ENCODE measurements at regions of chr14 and their contacts with region 1.

Region 1: DNA sequence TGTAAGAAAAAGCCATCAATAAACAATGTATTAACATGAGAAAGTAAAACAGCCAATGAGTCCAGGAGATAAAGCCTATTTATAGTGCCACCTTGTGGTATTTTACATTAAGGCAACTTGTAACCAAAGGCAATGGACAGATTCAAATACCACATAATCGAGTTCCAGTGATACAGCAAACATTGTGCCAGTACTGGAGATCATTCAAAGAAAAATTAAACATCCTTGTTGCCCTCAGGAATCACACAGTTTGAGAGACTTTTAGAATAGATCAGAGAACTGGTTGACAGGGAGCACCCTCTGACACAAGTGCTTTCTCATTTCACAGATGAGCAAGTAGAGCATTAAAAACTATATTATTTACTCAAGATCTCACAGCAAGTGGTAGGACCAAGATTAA is 98.1 kb downstream of the DDHD1 start:
- DNase-seq: no peak
- H3K4me3 ChIP-seq: no peak overlapping the region
- H3K27ac ChIP-seq: no peak overlapping the region
- H3K4me1 ChIP-seq: no peaks in the 10 kb centered on the region
- H3K27me3 ChIP-seq: no peaks in the 10 kb centered on the region
- CTCF ChIP-seq: peak in 2 of 3 donors; percentile 67
- EP300 ChIP-seq: no peak
- POLR2A ChIP-seq: no peak

Region 2: DNA sequence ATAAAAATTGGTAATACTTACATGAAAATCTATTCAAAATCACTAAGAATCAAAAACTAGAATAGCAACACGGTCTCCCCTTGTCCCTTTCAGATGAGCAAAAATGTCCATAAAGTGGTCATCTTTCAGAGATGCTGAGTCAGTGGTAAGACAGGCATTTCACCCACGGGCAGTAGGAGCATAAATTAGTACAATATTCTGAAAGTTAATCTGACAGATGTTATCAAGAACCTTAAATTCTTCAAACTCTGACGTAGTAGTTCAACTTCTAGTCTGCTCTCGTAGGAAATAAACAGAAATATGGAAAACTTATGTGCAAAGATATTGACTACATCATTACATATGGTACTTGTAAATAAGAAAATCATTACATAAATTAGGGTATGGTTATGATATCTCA is 230.5 kb before region 1 on chr14:
- intact Hi-C with region 1: loop called in 3 of 4 experiments (anchors 5 to 10 kb)
- DNase-seq: no peak
- H3K4me3 ChIP-seq: no peak overlapping the region
- H3K27ac ChIP-seq: no peak overlapping the region
- H3K4me1 ChIP-seq: peaks cover 1% of the 10 kb centered on the region
- H3K27me3 ChIP-seq: no peaks in the 10 kb centered on the region
- CTCF ChIP-seq: no peak
- EP300 ChIP-seq: no peak
- POLR2A ChIP-seq: no peak

Region 3: DNA sequence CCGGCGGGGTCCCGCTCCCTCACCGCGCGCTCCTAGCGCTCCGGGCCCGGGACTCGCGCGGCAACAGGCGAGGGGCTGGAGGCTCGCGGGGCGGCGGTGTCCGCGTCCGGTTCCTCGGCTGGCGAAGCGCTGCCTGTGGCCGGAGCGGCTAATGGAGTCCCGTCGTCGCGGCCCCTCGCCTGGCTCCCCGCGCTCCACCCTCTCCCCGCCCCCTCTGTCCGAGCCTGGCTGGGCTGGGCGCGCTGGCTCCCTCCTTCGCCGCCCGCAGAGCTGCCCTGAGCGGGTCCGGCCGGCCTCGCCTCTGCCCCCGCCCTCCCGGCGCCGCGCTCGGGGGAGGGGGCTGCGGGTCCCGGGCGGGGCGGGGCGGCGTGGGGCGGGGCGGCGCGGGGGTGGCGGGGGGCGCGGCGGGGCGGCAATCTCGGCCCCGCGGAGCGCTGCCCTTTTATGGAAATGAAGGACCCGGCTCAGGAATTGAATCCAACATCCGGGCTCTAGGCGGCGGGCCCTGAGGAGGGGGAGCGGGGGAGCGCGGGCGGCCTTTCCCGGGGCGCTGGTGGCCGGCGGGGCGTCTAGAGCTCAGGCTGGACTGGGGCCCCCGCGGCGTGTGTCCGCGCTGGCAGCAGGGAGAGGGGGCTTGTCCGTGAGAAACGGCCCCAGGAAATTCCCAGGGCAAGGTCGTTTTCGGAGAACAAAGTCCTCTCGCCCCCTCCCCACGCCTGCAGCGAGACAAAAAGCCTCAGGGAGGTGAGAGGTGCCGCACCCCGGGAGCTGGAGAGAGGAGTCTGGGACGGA is 103.9 kb before region 1 on chr14 and contains the start of gene FERMT2:
- intact Hi-C with region 1: loop called in 1 of 4 experiments (anchors 10 kb)
- DNase-seq: peak; percentile 91 to 94 (median 92)
- H3K4me3 ChIP-seq: peak within 1 kb of the TSS; percentile 76
- H3K27ac ChIP-seq: peak within 1 kb of the TSS; percentile 95 to 96
- H3K4me1 ChIP-seq: peaks cover 8% of the 10 kb centered on the region
- H3K27me3 ChIP-seq: no peaks in the 10 kb centered on the region
- CTCF ChIP-seq: peak in 2 of 3 donors; percentile 10 to 29
- EP300 ChIP-seq: no peak
- POLR2A ChIP-seq: peak; percentile 76
- total RNA-seq, gene FERMT2: 85.0 to 138 (median 98.4) TPM